ENCODE measurements at regions of chr2 and their contacts with region 1.

Region 1: DNA sequence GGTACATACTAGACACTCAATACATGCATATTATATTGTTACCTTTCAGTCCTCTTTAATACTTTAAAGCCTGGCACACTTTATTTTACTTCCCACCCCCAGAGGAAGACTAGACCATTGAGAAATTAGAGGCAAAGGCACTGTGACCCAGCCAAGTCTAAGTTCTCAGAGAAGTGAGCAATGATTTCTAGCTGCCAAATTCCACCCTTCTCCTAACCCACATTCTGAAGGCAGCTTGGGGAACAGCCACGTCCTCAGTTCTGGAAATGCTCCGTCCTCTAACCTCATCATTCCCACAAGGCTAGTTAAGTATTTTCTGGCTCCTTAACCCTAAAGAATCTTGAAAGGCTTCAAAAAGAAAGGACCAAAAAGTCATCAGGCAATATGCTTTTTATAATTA is 86.6 kb downstream of the COL5A2 start:
- DNase-seq: no peak
- H3K4me3 ChIP-seq: no peak overlapping the region
- CTCF ChIP-seq: no peak

Region 2: GRCh38 chr2:189060096-189060652 is 32.8 kb before region 1 on chr2:
- CTCF ChIA-PET with region 1: no interaction called
- POLR2A ChIA-PET with region 1: no interaction called
- DNase-seq: no peak
- H3K4me3 ChIP-seq: no peak overlapping the region
- CTCF ChIP-seq: no peak

Region 3: DNA sequence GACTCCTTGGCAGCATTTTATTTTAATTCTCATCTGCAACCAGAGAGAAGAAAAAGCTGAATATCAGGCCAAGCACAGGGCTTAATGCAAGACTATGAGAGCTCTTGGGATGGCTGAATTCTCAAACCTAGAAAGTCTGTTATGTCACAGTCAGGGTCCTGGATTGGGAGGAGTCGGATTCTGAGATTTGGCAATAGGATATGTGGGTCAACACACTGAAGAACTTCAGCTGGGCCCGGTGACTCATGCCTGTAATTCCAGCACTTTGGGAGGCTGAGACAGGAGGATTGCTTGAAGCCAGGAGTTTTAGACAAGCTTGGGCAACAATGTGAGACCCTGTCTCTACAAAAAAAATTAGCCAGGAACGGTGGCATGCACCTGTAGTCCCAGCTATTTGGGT is 16.4 kb before region 1 on chr2:
- CTCF ChIA-PET with region 1: interaction called, 13 read pairs
- POLR2A ChIA-PET with region 1: no interaction called
- DNase-seq: no peak
- H3K4me3 ChIP-seq: no peak overlapping the region
- CTCF ChIP-seq: no peak

Region 4: DNA sequence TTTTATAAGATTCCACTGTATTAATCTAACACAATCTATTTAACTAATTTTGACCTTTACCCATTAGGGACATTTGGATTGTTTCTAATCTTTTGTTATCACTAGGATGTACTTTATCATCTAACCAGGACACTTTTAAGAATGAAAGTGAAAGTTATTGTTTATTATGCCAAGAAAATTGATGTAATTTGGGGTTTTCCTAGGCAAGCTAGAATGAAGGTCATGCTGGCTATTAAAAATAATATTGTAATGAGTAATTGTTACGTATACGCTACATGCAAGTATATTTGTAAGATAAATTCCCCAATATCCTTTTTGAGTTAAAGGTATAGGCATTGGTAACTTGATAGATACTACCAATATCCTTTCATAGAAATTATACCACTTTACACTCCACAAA is 12.0 kb after region 1 on chr2:
- CTCF ChIA-PET with region 1: interaction called, 23 read pairs
- POLR2A ChIA-PET with region 1: no interaction called
- DNase-seq: no peak
- H3K4me3 ChIP-seq: no peak overlapping the region
- CTCF ChIP-seq: no peak

Region 5: GRCh38 chr2:189129971-189130370 is 37.0 kb after region 1 on chr2:
- CTCF ChIA-PET with region 1: interaction called, 12 read pairs
- POLR2A ChIA-PET with region 1: no interaction called
- DNase-seq: peak; percentile 77
- H3K4me3 ChIP-seq: no peak overlapping the region
- CTCF ChIP-seq: no peak

Region 6: DNA sequence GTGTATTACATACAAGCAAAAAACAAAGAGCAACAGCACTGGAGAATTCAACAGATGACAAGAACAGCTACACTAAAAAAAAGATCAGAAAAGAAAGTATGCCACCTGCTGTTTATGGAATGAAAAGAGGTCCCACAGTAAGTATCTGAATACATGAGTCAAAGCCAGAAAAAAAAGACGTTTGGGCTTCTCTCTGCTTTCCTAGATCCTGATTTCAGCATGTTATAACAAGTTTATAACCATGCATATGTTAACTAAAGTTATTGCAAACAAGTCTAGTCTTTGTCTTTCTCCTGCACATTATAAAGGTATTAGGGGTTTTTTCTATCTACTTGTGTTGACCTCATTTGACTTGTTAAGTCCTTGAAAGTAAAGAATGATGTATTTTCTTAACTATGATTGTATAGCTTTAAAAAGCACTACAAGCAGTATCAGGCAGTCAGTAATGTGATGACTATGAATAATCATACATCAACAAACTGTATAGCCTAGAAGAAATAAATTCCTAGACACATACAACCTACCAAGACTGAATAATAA is 195.1 kb after region 1 on chr2:
- CTCF ChIA-PET with region 1: interaction called, 25 read pairs
- POLR2A ChIA-PET with region 1: interaction called, 3 read pairs
- DNase-seq: peak; percentile 61
- H3K4me3 ChIP-seq: no peak overlapping the region
- CTCF ChIP-seq: peak; percentile 30

Region 7: GRCh38 chr2:189412330-189412953 is 319.5 kb after region 1 on chr2:
- CTCF ChIA-PET with region 1: interaction called, 12 read pairs
- POLR2A ChIA-PET with region 1: no interaction called
- DNase-seq: no peak
- H3K4me3 ChIP-seq: no peak overlapping the region
- CTCF ChIP-seq: peak; percentile 43